Mucosa of descending colon (tissue), 3 donors: ENCODE measurements at regions of chr11 and their contacts with region 1.

Region 1: GRCh38 chr11:68546555-68546954 is 86.0 kb downstream of the PPP6R3 start:
- DNase-seq: no peak
- ATAC-seq: peak; percentile 35
- H3K4me3 ChIP-seq: no peak overlapping the region
- H3K4me1 ChIP-seq: peaks cover 1% of the 10 kb centered on the region
- CTCF ChIP-seq: no peak

Region 2: GRCh38 chr11:68525930-68526329 is 20.6 kb before region 1 on chr11:
- intact Hi-C with region 1: loop called in 1 of 2 experiments (anchors 2 kb)
- DNase-seq: no peak
- ATAC-seq: peak; percentile 9
- H3K4me3 ChIP-seq: no peak overlapping the region
- H3K4me1 ChIP-seq: peaks cover 35% of the 10 kb centered on the region
- CTCF ChIP-seq: no peak

Region 3: DNA sequence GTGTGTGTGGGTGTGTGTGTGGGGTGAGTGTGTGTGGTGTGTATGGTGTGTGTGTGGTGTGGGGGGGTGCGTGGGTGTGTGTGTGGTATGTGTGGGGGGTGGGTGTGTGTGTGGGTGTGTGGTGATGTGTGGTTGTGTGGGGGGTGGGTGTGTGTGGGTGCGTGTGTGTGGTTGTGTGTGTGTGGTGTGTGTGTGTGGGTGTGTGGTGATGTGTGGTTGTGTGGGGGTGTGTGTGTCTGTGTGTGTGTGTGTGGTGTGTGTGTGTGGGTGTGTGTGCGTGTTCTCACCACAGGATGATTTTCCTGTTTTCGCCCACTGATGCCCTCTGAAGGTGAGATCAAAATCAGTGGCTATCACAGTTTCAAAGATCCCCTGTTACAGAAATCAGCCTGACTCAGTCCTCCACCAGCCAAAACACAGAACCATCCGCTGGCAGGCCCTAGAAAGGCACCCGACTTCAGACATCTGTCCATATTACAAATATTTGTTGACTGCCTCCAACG is 270.4 kb after region 1 on chr11:
- intact Hi-C with region 1: no loop called
- DNase-seq: no peak
- ATAC-seq: no peak
- H3K4me3 ChIP-seq: no peak overlapping the region
- H3K4me1 ChIP-seq: peaks cover 10% of the 10 kb centered on the region
- CTCF ChIP-seq: no peak